GM13976 (cell line): ENCODE measurements at regions of chr12 and their contacts with region 1.

Region 1: DNA sequence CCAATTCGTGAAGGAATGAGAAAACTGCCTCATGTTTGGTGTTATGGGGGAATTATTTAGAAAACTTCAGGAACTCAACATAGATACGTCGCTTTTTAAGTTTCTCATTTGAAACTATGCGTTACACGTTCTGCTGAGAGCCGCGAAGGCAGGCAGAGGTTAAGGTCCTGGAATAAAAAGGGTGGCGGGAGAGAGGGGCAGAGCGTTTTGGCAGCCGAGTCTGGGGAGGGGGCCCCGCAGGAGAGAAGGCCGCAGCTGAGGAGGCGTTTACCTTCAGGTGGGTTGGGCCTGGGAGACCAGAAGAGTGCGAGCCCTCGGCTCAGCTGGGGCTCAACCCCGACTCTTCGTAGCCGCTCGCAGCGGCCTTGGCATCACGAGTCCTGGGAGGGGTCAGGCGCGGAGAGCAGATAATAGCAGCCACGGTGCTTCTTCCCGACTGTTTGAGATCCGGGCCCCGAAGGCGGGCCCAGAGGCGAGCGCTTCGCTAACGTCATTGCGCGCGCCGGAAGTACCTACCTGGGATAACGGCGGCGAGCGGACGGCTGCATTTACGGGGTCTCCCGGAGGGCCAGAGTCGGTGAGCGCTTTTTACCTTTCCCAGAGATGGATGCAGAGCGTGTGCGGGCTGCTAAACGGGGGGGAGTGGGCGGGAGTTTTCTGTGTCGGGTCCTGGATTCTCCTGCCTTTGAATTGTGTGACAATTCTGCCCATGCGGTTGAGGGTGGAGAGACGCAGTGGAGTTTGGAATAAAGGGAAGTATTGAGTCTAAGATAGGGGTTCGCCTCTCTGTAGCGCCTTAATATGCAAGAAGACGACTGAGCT is at the starts of genes PPHLN1 and ZCRB1:
- DNase-seq: peak; percentile 89
- CTCF ChIP-seq: no peak

Region 2: GRCh38 chr12:42129595-42130204 is 196.2 kb before region 1 on chr12:
- in situ Hi-C with region 1: loop called (anchors 10 kb)
- DNase-seq: no peak
- CTCF ChIP-seq: peak; percentile 48